Activated CD8-positive, alpha-beta T cell treated with anti-CD3 and anti-CD28 coated beads for 36 hours (primary cell): ENCODE measurements at regions of chr15 and their contacts with region 1.

Region 1: DNA sequence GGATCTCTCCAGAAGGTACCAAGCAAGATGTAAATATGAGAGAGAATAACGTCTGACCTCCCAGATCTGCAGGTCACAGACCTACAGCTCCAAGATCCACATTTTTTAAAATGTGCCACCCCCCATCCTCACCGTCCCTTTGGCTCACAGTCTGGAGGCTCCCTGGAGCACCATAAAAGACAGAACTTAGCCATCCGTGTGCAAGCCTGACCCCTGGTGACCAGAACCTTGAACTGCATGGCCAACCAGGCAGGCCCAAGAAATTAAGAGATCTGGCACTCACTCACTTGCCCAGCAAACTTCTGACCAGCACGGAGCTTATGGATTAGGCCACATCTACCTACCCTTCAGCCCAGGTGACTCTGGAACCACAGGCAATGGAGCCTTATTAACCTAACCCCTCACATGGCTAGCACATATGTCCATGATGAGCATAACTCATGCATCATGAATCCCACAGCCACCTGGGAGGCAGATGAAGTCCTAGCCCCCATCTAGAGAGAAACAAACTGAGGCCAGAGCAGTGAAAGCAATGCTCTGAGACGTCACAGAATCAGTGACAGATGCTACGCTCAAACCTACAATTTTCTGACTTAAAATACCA is 275.3 kb downstream of the UACA start:
- DNase-seq: peak; percentile 82
- ATAC-seq: no peak
- H3K4me3 Mint-ChIP-seq: no peak overlapping the region
- H3K27ac Mint-ChIP-seq: no peak overlapping the region
- H3K4me1 Mint-ChIP-seq: peaks cover 59% of the 10 kb centered on the region
- H3K27me3 Mint-ChIP-seq: peaks cover 31% of the 10 kb centered on the region
- CTCF ChIP-seq: peak; percentile 92

Region 2: GRCh38 chr15:69755551-69756310 is 732.4 kb before region 1 on chr15:
- CTCF ChIA-PET with region 1: interaction called, 3 read pairs
- POLR2A ChIA-PET with region 1: interaction called, 3 read pairs
- intact Hi-C with region 1: loop called (anchors 5 kb)
- DNase-seq: peak; percentile 95
- ATAC-seq: peak; percentile 73
- H3K4me3 Mint-ChIP-seq: peak overlapping the region; percentile 19
- H3K27ac Mint-ChIP-seq: peak overlapping the region; percentile 88
- H3K4me1 Mint-ChIP-seq: peaks cover 79% of the 10 kb centered on the region
- H3K27me3 Mint-ChIP-seq: peaks cover 6% of the 10 kb centered on the region
- CTCF ChIP-seq: no peak

Region 3: GRCh38 chr15:70299931-70300869 is 187.9 kb before region 1 on chr15:
- CTCF ChIA-PET with region 1: interaction called, 6 read pairs
- POLR2A ChIA-PET with region 1: interaction called, 3 read pairs
- intact Hi-C with region 1: loop called (anchors 10 kb)
- DNase-seq: peak; percentile 93
- ATAC-seq: peak; percentile 99
- H3K4me3 Mint-ChIP-seq: no peak overlapping the region
- H3K27ac Mint-ChIP-seq: peak overlapping the region; percentile 14
- H3K4me1 Mint-ChIP-seq: peaks cover 2% of the 10 kb centered on the region
- H3K27me3 Mint-ChIP-seq: peaks cover 9% of the 10 kb centered on the region
- CTCF ChIP-seq: no peak

Region 4: GRCh38 chr15:70466895-70467529 is 21.1 kb before region 1 on chr15:
- CTCF ChIA-PET with region 1: interaction called, 17 read pairs
- POLR2A ChIA-PET with region 1: no interaction called
- intact Hi-C with region 1: no loop called
- DNase-seq: peak; percentile 72
- ATAC-seq: peak; percentile 88
- H3K4me3 Mint-ChIP-seq: no peak overlapping the region
- H3K27ac Mint-ChIP-seq: no peak overlapping the region
- H3K4me1 Mint-ChIP-seq: no peaks in the 10 kb centered on the region
- H3K27me3 Mint-ChIP-seq: peaks cover 16% of the 10 kb centered on the region
- CTCF ChIP-seq: peak; percentile 68

Region 5: GRCh38 chr15:70474471-70475396 is 13.4 kb before region 1 on chr15:
- CTCF ChIA-PET with region 1: interaction called, 23 read pairs
- POLR2A ChIA-PET with region 1: interaction called, 8 read pairs
- intact Hi-C with region 1: no loop called
- DNase-seq: peak; percentile 75
- ATAC-seq: peak; percentile 69
- H3K4me3 Mint-ChIP-seq: peak overlapping the region; percentile 11
- H3K27ac Mint-ChIP-seq: no peak overlapping the region
- H3K4me1 Mint-ChIP-seq: peaks cover 34% of the 10 kb centered on the region
- H3K27me3 Mint-ChIP-seq: peaks cover 39% of the 10 kb centered on the region
- CTCF ChIP-seq: no peak

Region 6: GRCh38 chr15:70504299-70504951 is 16.3 kb after region 1 on chr15:
- CTCF ChIA-PET with region 1: interaction called, 36 read pairs
- POLR2A ChIA-PET with region 1: interaction called, 11 read pairs
- intact Hi-C with region 1: no loop called
- DNase-seq: peak; percentile 62
- ATAC-seq: peak; percentile 32
- H3K4me3 Mint-ChIP-seq: no peak overlapping the region
- H3K27ac Mint-ChIP-seq: peak overlapping the region; percentile 52
- H3K4me1 Mint-ChIP-seq: peaks cover 73% of the 10 kb centered on the region
- H3K27me3 Mint-ChIP-seq: peaks cover 2% of the 10 kb centered on the region
- CTCF ChIP-seq: no peak

Region 7: GRCh38 chr15:70512772-70513362 is 24.8 kb after region 1 on chr15:
- CTCF ChIA-PET with region 1: interaction called, 12 read pairs
- POLR2A ChIA-PET with region 1: interaction called, 11 read pairs
- intact Hi-C with region 1: no loop called
- DNase-seq: peak; percentile 85
- ATAC-seq: peak; percentile 88
- H3K4me3 Mint-ChIP-seq: no peak overlapping the region
- H3K27ac Mint-ChIP-seq: no peak overlapping the region
- H3K4me1 Mint-ChIP-seq: peaks cover 22% of the 10 kb centered on the region
- H3K27me3 Mint-ChIP-seq: peaks cover 2% of the 10 kb centered on the region
- CTCF ChIP-seq: peak; percentile 98